ENCODE measurements at regions of chr16 and their contacts with region 1.

Region 1: GRCh38 chr16:75198135-75198600 is 8.8 kb downstream of the CTRB2 start:
- DNase-seq: no peak
- H3K4me3 ChIP-seq: no peak overlapping the region
- CTCF ChIP-seq: no peak

Region 2: DNA sequence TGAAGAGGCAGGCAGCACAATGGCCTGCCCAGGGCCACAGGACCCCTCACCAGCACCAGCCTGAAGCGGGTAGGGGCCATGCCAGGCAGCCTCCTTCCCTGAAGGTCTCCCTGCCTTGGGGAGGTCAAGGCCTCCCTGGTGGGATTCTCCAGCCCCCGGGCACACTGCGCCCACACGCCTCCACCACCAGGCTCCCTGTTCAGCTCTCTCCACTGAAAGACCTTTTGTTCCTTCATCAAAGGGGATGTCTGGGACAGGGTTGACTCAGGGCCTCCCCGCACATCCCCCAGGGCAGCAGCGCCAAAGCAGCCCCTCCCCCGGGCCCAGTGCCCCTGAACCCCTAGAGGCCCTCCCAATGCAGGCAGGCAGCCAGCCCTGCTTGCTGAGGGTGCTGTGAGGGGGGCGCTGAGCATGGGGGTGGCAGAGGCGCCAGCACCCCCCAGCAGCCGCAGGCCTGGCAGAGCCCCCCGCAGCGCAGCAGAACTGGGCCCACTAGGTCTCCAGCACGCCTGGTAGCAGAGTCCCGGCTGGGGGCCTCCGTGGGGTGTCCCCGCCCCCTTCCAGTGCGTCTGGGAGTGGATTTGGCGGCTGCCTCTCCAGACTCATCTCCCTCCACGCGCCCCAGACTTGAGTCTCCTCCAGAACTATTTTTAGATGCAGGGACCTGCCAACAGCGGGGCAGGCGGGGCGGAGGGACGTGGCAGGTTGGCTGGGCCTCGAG is 40.1 kb after region 1 on chr16:
- CTCF ChIA-PET with region 1: interaction called, 33 read pairs
- POLR2A ChIA-PET with region 1: no interaction called
- DNase-seq: peak; percentile 69
- H3K4me3 ChIP-seq: peak overlapping the region; percentile 8
- CTCF ChIP-seq: no peak

Region 3: GRCh38 chr16:75402821-75403475 is 204.8 kb after region 1 on chr16:
- CTCF ChIA-PET with region 1: interaction called, 342 read pairs
- POLR2A ChIA-PET with region 1: no interaction called
- DNase-seq: no peak
- H3K4me3 ChIP-seq: no peak overlapping the region
- CTCF ChIP-seq: peak; percentile 39

Region 4: DNA sequence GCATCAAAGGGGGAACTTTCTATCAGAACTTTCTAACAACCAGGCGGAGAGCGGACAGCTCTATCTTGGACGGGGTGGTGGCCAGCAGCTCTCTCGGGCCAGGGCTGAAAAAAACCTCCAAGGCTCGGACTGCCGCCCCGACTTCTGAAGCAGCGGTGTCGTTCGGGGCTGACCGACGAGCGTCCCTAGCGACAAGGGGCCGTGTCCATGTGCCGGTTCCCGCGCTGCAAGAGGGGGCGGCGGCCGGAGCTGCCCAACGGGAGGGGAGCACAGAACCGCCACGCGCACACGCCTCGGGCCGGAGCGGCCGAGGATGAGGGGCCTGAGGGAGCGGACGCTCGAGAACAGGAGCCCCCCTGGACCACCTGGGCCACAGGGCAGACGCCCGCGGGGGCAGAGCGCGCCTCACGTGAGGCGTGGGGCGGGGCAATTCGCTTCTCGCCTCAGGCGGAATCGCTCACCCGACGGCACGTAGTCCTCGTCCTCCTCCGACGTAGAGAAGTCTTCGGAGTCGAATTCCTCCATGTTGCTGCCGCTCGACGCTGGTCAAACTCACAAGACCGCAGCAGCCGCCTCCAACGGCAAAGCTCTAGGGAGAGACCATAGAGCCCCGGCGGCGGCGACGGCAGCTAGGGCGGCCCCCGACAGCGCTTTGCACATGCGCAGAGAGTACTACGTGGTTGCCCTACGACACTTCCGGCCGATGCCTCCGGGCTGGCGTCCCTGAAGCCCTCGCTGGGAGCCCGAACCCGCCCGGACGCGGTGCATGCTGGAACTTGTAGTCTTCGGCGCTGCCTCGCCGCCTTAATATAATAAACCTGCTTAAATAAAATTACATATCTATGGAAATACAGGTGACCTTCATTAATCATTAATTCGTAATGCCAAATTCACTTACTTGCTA is 234.9 kb after region 1 on chr16 and contains the start of gene CFDP1:
- CTCF ChIA-PET with region 1: interaction called, 11 read pairs
- POLR2A ChIA-PET with region 1: no interaction called
- DNase-seq: peak; percentile 44
- H3K4me3 ChIP-seq: peak within 1 kb of the TSS; percentile 94
- CTCF ChIP-seq: no peak

Region 5: GRCh38 chr16:75471723-75472633 is 273.8 kb after region 1 on chr16:
- CTCF ChIA-PET with region 1: interaction called, 70 read pairs
- POLR2A ChIA-PET with region 1: no interaction called
- DNase-seq: peak; percentile 9
- H3K4me3 ChIP-seq: no peak overlapping the region
- CTCF ChIP-seq: peak; percentile 78

Region 6: GRCh38 chr16:75764154-75764768 is 566.1 kb after region 1 on chr16:
- CTCF ChIA-PET with region 1: interaction called, 11 read pairs
- POLR2A ChIA-PET with region 1: no interaction called
- DNase-seq: peak; percentile 24
- H3K4me3 ChIP-seq: no peak overlapping the region
- CTCF ChIP-seq: peak; percentile 69